ENCODE measurements at regions of chrX and their contacts with region 1.

Region 1: DNA sequence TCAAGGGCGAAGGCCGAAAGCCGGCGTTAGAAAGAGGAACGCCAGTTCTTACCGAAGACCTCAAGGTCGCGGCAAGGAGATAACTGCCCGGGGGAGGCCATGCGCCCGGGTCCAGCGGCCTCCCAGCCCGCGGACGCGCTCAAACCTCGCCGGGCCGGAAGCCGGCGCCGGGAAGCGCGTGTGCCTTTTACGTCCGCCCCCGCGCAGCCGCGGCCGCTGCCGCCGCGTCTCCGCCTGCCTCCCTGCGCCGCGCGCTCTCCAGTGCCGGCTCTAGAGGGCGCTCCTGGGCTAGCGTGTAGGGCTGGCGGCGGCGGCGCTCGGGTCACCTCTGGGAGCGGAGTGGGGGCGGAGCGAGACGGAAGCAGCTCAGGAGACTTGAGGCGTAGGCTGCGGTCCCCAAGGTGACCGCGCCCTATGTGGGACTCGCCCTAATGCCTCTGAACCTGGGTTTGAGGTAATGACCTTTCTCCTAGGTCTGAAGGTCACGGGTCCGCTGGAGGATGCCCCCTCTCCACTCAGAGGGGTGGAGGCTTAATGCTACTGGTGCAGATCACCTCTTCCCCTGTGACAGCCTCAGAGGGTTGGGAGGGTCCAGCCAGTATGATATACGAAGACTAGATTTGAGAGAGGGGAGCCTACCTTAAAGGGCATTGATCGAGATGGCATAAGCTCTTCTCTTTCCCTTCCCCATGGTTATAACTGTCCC is 839 bp downstream of the SLC25A5 start:
- DNase-seq: peak; percentile 76
- H3K4me3 ChIP-seq: peak overlapping the region; percentile 68 to 80 (median 68)
- H3K27ac ChIP-seq: peak overlapping the region; percentile 80
- H3K4me1 ChIP-seq: peaks cover 5% of the 10 kb centered on the region
- H3K27me3 ChIP-seq: no peaks in the 10 kb centered on the region
- CTCF ChIP-seq: peak; percentile 37 to 64

Region 2: GRCh38 chrX:119292445-119292844 is 176.6 kb before region 1 on chrX:
- CTCF ChIA-PET with region 1: no interaction called
- dilution Hi-C with region 1: no loop called
- in situ Hi-C with region 1: no loop called
- intact Hi-C with region 1: loop called (anchors 1 kb)
- DNase-seq: peak; percentile 11
- H3K4me3 ChIP-seq: no peak overlapping the region
- H3K27ac ChIP-seq: no peak overlapping the region
- H3K4me1 ChIP-seq: no peaks in the 10 kb centered on the region
- H3K27me3 ChIP-seq: no peaks in the 10 kb centered on the region
- CTCF ChIP-seq: peak; percentile 36 to 41

Region 3: DNA sequence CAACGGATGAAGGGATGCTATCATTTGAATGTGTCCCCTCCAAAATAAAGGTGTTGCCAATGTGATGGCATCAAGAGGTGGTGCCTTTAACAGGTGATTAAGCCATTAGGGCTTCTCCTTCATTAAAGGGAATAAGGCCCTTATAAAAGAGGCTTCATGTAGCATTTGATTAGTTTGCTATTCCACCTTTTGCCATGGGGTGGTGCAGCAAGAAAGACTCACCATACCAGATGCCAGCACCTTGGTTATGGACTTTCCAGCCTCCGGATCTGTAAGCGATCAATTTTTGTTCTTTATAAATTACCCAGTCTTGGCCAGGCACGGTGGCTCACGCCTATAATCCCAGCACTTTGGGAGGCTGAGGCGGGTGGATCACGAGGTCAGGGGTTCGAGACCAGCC is 77.8 kb before region 1 on chrX:
- CTCF ChIA-PET with region 1: interaction called, 3 read pairs
- dilution Hi-C with region 1: no loop called
- in situ Hi-C with region 1: no loop called
- intact Hi-C with region 1: loop called (anchors 5 kb)
- DNase-seq: peak; percentile 16
- H3K4me3 ChIP-seq: no peak overlapping the region
- H3K27ac ChIP-seq: no peak overlapping the region
- H3K4me1 ChIP-seq: no peaks in the 10 kb centered on the region
- H3K27me3 ChIP-seq: no peaks in the 10 kb centered on the region
- CTCF ChIP-seq: peak; percentile 36 to 52

Region 4: GRCh38 chrX:119482481-119483480 is 13.7 kb after region 1 on chrX:
- CTCF ChIA-PET with region 1: interaction called, 3 read pairs
- dilution Hi-C with region 1: no loop called
- in situ Hi-C with region 1: no loop called
- intact Hi-C with region 1: loop called (anchors 1 kb)
- DNase-seq: peak; percentile 42
- H3K4me3 ChIP-seq: peak overlapping the region in 2 of 3 experiments; percentile 18 to 30
- H3K27ac ChIP-seq: no peak overlapping the region
- H3K4me1 ChIP-seq: peaks cover 12% of the 10 kb centered on the region
- H3K27me3 ChIP-seq: no peaks in the 10 kb centered on the region
- CTCF ChIP-seq: peak; percentile 45 to 62